HepG2 (cell line): ENCODE measurements at regions of chr12 and their contacts with region 1.

Region 1: DNA sequence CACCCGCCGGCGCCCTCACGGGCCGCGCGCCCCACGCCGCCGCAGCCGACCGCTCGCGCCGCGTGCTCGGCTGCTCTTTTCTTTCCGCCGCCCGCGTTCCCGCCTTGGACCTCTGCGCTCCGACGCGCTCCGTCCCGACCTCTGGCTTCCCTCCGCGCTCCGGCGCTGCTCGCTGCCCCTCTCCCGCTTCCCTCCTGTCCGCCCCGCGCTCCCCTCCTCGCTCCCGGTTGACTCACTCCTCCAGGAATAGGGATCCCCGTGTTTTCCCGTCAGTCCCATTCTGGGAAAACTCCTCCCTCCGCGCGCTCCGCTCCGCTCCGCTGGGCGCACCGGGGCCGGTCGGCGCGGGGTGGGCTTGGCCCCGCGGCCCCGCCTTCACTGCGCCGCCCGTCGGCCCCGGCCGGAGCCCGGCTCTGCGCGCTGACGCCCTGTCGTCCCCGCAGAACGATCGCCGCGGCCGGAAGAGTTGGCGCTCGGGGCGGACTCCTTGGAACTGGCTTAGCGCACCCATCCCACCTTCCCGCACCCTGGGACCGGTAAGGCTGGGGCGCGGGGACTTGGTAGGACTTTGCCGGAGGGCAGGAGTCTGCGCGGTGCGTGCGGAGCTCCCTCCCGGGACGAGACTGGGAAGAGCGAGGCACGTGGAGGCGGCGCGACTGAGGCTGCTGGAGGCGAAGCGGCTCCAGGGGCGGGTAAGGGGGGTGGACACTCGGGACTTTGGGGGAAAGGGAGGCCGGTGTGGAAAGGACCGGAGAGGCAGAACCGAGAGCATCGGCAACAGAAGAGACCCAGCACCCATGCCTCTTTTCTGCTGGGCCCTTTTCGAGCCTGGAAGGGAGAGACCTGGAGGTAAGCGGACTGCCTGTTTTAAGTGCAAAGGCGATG is 550 bp downstream of the TEAD4 start:
- DNase-seq: peak; percentile 21
- ATAC-seq: peak; percentile 14
- H3K4me3 ChIP-seq: peak overlapping the region; percentile 72 to 79 (median 73)
- H3K27ac ChIP-seq: peak overlapping the region; percentile 96
- H3K4me1 ChIP-seq: peaks cover 53% of the 10 kb centered on the region
- H3K27me3 ChIP-seq: no peaks in the 10 kb centered on the region
- CTCF ChIP-seq: peak; percentile 20; the same call in 1 of the 2 replicates
- EP300 ChIP-seq: 0 out of 4 replicates have a peak, but pooled peaks of 1 of the 2 experiments have one; percentile 8
- POLR2A ChIP-seq: 0 out of 4 replicates have a peak, but pooled peaks of 1 of the 2 experiments have one; percentile 23
- RAD21 ChIP-seq: no peak

Region 2: DNA sequence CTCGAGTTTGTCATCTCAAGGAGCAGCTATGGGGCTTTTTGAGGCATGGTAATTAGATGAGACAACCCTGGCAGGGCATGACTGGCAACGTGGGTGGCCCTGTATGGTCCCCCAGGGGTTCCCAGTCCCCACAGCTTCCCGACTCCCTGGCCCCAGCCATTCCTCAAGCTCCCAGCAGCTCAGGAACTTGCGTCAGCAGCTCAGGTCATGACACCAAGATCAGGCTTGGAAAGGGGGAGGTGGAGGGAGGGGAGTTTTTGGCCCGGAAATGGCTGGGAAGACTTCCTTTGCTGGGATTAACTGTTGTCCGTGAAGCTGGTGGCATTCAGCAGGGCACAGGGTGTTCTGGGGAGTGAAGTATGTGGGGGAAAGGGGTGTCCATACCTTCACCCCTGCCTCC is 114.5 kb before region 1 on chr12:
- CTCF ChIA-PET with region 1: no interaction called
- POLR2A ChIA-PET with region 1: no interaction called
- in situ Hi-C with region 1: no loop called
- intact Hi-C with region 1: loop called (anchors 5 kb)
- DNase-seq: no peak
- ATAC-seq: no peak
- H3K4me3 ChIP-seq: no peak overlapping the region
- H3K27ac ChIP-seq: no peak overlapping the region
- H3K4me1 ChIP-seq: peaks cover 42% of the 10 kb centered on the region
- H3K27me3 ChIP-seq: no peaks in the 10 kb centered on the region; a peak in 1 of 5 replicates
- CTCF ChIP-seq: no peak
- EP300 ChIP-seq: no peak
- POLR2A ChIP-seq: no peak
- RAD21 ChIP-seq: no peak

Region 3: DNA sequence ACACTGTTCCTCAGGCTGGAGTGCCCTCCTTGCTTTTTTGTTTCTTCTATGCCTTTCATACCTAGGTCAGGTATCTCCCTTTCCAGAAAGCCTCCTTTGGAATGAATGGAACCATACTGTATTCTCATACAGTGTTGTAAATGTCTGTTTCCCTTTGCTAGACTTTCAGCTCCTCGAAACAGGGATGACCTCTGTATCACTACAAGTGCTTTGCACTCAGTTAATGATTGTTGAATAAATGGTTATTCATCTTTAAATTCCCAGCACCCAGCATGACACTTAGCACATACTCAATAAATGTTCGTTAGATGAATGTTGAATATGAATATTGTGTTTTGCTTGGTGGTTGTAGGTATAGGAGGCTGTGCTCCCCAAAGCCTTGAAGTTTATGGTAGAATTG is 74.9 kb before region 1 on chr12:
- CTCF ChIA-PET with region 1: no interaction called
- POLR2A ChIA-PET with region 1: interaction called, 6 read pairs
- in situ Hi-C with region 1: loop called (anchors 5 kb)
- intact Hi-C with region 1: loop called (anchors 5 kb)
- DNase-seq: no peak
- ATAC-seq: peak; percentile 16; the same call in 2 of the 3 replicates
- H3K4me3 ChIP-seq: no peak overlapping the region
- H3K27ac ChIP-seq: no peak overlapping the region
- H3K4me1 ChIP-seq: peaks cover 45% of the 10 kb centered on the region
- H3K27me3 ChIP-seq: no peaks in the 10 kb centered on the region; a peak in 1 of 5 replicates
- CTCF ChIP-seq: no peak
- EP300 ChIP-seq: no peak
- POLR2A ChIP-seq: no peak
- RAD21 ChIP-seq: no peak

Region 4: DNA sequence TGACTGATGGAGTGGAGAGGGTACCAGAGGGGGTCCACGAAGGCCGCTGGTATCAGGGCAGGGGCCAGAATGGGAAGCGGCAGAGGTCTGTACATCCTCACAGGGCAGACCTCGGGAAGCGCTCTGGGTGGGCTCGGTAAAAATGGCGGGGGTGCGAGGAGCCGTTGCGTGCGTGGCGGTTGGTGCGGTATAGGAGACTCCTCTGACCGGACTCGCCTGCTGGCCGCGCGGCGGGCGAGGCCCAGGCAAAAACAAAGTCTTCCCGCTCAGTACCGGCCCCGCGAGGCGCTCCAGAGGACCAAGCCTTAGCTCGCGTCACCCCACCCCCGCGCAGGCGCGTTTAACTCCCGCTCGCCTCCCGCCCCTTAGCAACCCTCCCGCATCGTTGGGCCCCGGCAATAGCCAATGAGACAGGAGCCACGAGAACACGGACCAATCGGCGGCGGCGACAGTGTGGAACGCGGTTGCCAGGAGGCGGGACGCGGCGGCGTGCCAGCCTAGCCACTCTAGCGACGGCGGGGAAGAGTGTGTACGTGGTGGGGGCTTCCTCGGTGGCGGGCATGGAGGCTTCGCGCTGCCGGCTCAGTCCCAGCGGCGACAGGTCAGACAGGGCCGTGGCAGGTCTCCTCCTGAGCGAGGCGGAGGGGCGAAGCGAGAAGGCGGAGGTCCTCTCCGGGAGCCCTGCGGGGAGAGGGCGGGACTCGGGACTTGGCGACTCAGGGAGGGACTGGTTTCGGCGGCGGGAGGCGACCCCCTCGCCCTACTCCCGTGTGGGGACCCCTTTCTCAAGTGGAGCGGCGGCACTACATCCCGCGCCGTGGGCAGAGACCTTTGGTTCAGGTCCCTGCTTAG is 69.1 kb before region 1 on chr12 and contains the start of gene TULP3:
- CTCF ChIA-PET with region 1: no interaction called
- POLR2A ChIA-PET with region 1: interaction called, 6 read pairs
- in situ Hi-C with region 1: loop called (anchors 5 kb)
- intact Hi-C with region 1: loop called (anchors 5 kb)
- DNase-seq: peak; percentile 95
- ATAC-seq: peak; percentile 97
- H3K4me3 ChIP-seq: peak within 1 kb of the TSS; percentile 81 to 87 (median 82)
- H3K27ac ChIP-seq: peak within 1 kb of the TSS; percentile 78
- H3K4me1 ChIP-seq: peaks cover 61% of the 10 kb centered on the region
- H3K27me3 ChIP-seq: no peaks in the 10 kb centered on the region
- CTCF ChIP-seq: peak; percentile 2; the same call in 1 of the 2 replicates
- EP300 ChIP-seq: no peak
- POLR2A ChIP-seq: peak; percentile 65 to 93
- RAD21 ChIP-seq: no peak
- total RNA-seq, gene TULP3: 11.2 and 11.8 TPM in 2 replicates

Region 5: GRCh38 chr12:2944401-2945047 is 15.2 kb before region 1 on chr12:
- CTCF ChIA-PET with region 1: no interaction called
- POLR2A ChIA-PET with region 1: interaction called, 14 read pairs
- in situ Hi-C with region 1: no loop called
- intact Hi-C with region 1: no loop called
- DNase-seq: peak; percentile 46
- ATAC-seq: peak; percentile 82
- H3K4me3 ChIP-seq: no peak overlapping the region
- H3K27ac ChIP-seq: no peak overlapping the region
- H3K4me1 ChIP-seq: peaks cover 51% of the 10 kb centered on the region
- H3K27me3 ChIP-seq: no peaks in the 10 kb centered on the region
- CTCF ChIP-seq: peak; percentile 96
- EP300 ChIP-seq: no peak
- POLR2A ChIP-seq: no peak
- RAD21 ChIP-seq: peak; percentile 80

Region 6: GRCh38 chr12:3034067-3034750 is 74.5 kb after region 1 on chr12:
- CTCF ChIA-PET with region 1: no interaction called
- POLR2A ChIA-PET with region 1: no interaction called
- in situ Hi-C with region 1: no loop called
- intact Hi-C with region 1: loop called (anchors 5 kb)
- DNase-seq: peak; percentile 55
- ATAC-seq: peak; percentile 93
- H3K4me3 ChIP-seq: no peak overlapping the region
- H3K27ac ChIP-seq: no peak overlapping the region
- H3K4me1 ChIP-seq: no peaks in the 10 kb centered on the region
- H3K27me3 ChIP-seq: no peaks in the 10 kb centered on the region
- CTCF ChIP-seq: peak; percentile 83
- EP300 ChIP-seq: no peak; a peak in 1 of 4 replicates
- POLR2A ChIP-seq: no peak
- RAD21 ChIP-seq: peak; percentile 61

Region 7: GRCh38 chr12:3107071-3107583 is 147.4 kb after region 1 on chr12:
- CTCF ChIA-PET with region 1: no interaction called
- POLR2A ChIA-PET with region 1: no interaction called
- in situ Hi-C with region 1: no loop called
- intact Hi-C with region 1: no loop called
- DNase-seq: no peak
- ATAC-seq: no peak
- H3K4me3 ChIP-seq: no peak overlapping the region
- H3K27ac ChIP-seq: peak overlapping the region; percentile 16
- H3K4me1 ChIP-seq: peaks cover 72% of the 10 kb centered on the region
- H3K27me3 ChIP-seq: no peaks in the 10 kb centered on the region
- CTCF ChIP-seq: no peak
- EP300 ChIP-seq: no peak
- POLR2A ChIP-seq: no peak
- RAD21 ChIP-seq: no peak